Heart right ventricle (tissue), 16 donors: ENCODE measurements at regions of chr3 and their contacts with region 1.

Region 1: DNA sequence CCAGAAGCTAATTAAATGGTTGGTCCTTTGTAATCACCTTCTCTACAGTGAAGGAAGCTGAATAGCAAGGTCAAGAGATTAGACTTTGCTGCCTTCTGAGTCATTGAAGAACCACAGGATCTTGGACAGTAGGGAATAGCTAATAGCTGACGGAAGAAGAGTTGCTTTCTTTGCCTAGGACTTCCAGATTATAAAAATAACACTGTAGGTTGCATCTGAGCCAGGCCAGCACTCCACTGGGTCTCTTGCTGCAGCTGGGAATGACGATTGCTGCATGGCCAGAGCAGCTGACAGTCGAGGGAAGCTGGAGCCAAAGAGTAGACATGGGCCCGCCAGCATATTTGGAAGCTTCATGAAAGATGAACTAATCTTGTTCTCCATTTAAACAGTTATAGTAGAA is 81.5 kb upstream of the KCNMB2 start:
- DNase-seq: peak; percentile 62 to 79
- ATAC-seq: peak; percentile 94 to 97 (median 95)
- H3K4me3 ChIP-seq: no peak overlapping the region
- H3K27ac ChIP-seq: peak overlapping the region in 9 of 10 donors; percentile 16 to 84 (median 47)
- H3K4me1 ChIP-seq: peaks cover 0 to 34% (median 14%) of the 10 kb centered on the region in 9 donors
- H3K27me3 ChIP-seq: no peaks in the 10 kb centered on the region
- CTCF ChIP-seq: no peak

Region 2: DNA sequence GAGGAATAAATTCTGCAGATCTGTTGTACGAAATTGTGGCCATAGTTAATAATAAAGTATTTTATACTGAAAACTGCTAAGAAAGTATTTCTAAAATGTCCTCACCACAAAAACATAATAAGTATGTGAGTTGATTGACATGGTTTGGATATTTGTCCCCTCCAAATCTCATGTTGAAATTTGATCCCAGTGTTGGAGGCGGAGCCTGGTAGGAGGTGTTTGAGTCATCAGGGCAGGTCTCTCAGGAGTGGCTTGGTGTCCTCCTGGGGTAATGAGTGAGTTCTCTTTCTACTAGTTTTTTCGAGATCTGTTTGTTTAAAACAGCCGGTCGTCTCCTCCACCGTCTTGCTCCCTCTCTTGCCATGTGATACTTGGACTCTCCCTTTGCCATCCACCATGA is 342.6 kb before region 1 on chr3:
- intact Hi-C with region 1: no loop called
- DNase-seq: no peak
- ATAC-seq: no peak
- H3K4me3 ChIP-seq: no peak overlapping the region
- H3K27ac ChIP-seq: no peak overlapping the region
- H3K4me1 ChIP-seq: no peaks in the 10 kb centered on the region
- H3K27me3 ChIP-seq: no peaks in the 10 kb centered on the region
- CTCF ChIP-seq: no peak

Region 3: DNA sequence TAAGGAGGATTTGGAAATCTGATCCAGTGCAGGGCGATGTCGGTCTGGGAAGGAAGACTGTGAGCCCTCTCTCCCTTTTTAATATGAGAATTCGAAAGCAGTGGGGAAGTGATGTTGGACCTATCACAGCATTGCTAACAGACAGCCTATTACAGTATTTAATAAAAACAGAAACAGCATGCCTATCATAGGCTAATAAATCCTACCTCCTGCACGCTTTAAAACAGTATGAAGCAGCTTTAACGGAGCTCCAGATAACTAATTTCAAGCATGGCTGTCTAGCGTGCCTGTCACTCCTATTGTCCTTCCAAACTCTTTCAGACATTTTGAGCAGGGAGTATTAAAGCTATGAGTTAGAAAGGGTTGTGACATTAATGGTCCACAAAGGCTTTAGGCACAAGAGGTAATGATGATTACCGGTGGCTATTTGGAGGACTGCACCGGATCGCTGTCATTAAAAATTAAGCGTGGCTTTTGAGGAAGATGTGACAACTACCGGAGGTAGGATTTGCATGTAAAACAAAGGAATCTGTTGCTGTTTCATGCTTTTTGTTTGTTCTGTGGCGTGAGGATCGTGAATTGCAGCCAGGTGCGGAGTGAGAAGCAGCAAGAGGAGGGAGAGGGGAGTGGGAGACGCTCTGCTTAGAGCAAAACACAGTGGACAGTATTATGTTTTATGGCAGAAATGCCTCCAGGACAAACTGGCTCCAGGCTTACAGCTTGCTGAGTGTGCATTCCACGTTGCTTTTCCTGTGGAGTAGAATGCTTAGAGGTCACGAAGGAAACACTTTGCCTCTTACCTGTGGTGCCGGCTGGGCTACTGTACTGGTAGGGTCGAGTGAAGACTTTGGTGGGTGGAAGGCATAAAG is 81.7 kb after region 1 on chr3 and contains the start of gene KCNMB2:
- intact Hi-C with region 1: loop called in 2 of 10 experiments (anchors 5 to 10 kb)
- DNase-seq: peak in 1 of 2 donors; percentile 8
- ATAC-seq: peak; percentile 62 to 88 (median 84)
- H3K4me3 ChIP-seq: peak within 1 kb of the TSS; percentile 25 to 63 (median 54)
- H3K27ac ChIP-seq: peak within 1 kb of the TSS in 8 of 10 donors; percentile 28 to 70 (median 52)
- H3K4me1 ChIP-seq: peaks cover 0 to 10% (median 0%) of the 10 kb centered on the region in 9 donors
- H3K27me3 ChIP-seq: no peaks in the 10 kb centered on the region
- CTCF ChIP-seq: no peak
- total RNA-seq, gene KCNMB2: 1.5 to 9.2 (median 4.2) TPM

Region 4: DNA sequence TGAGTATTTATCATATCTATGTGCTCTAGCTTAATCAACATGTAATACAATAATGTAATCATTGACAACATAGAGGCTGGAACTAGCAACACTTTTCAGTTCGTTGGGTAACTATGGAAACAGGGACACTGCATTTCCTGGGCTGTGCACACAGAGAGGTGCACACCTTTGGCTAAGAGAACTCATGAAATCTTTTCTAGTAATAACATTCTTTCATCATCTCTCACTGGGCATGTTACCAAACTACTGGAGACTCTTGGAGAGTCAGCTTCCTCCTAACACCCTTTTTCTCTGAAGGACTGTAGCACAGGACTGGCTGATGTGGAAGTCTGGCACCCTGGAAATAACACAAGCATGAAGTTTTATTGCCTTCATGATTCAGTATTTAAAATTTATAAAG is 217.1 kb after region 1 on chr3:
- intact Hi-C with region 1: loop called in 1 of 10 experiments (anchors 10 kb)
- DNase-seq: no peak
- ATAC-seq: peak in 5 of 8 donors; percentile 20 to 71 (median 39)
- H3K4me3 ChIP-seq: no peak overlapping the region
- H3K27ac ChIP-seq: peak overlapping the region in 6 of 10 donors; percentile 48 to 69 (median 58)
- H3K4me1 ChIP-seq: peaks cover 3 to 50% (median 24%) of the 10 kb centered on the region in 9 donors
- H3K27me3 ChIP-seq: no peaks in the 10 kb centered on the region
- CTCF ChIP-seq: no peak

Region 5: GRCh38 chr3:178703268-178703975 is 248.7 kb after region 1 on chr3:
- intact Hi-C with region 1: no loop called
- DNase-seq: no peak
- ATAC-seq: no peak
- H3K4me3 ChIP-seq: no peak overlapping the region
- H3K27ac ChIP-seq: no peak overlapping the region
- H3K4me1 ChIP-seq: peaks cover 0 to 13% (median 0%) of the 10 kb centered on the region in 9 donors
- H3K27me3 ChIP-seq: no peaks in the 10 kb centered on the region
- CTCF ChIP-seq: no peak

Region 6: DNA sequence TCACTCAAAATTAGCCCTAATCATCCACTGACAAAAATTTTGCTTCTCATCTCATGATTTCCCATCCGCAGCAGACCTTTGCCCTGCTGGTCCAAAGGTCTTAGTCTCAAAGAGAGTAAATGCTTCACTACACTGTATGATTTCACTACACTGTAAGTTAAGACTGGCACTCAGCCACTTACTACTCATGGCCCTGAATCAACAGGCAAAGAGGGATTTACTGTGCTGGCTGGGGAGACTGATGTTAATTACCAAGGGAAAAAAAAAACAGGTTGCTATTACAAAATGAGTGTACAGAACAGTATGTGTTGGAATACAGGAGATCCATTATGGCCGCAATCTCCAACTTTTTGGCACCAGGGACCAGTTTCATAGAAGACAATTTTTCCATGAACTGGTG is 402.1 kb after region 1 on chr3:
- intact Hi-C with region 1: loop called in 1 of 10 experiments (anchors 10 kb)
- DNase-seq: no peak
- ATAC-seq: no peak
- H3K4me3 ChIP-seq: no peak overlapping the region
- H3K27ac ChIP-seq: no peak overlapping the region
- H3K4me1 ChIP-seq: peaks cover 0 to 6% (median 0%) of the 10 kb centered on the region in 9 donors
- H3K27me3 ChIP-seq: no peaks in the 10 kb centered on the region
- CTCF ChIP-seq: no peak